ENCODE measurements at regions of chr20 and their contacts with region 1.

Region 1: GRCh38 chr20:8131598-8132483 is at the start of gene PLCB1:
- DNase-seq: peak; percentile 53 to 93 (median 77)
- ATAC-seq: peak; percentile 90
- H3K4me3 ChIP-seq: peak within 1 kb of the TSS; percentile 55 to 61
- H3K4me3 Mint-ChIP-seq: peak within 1 kb of the TSS; percentile 80
- H3K27ac ChIP-seq: no peak within 1 kb of the TSS
- H3K27ac Mint-ChIP-seq: no peak within 1 kb of the TSS
- H3K4me1 ChIP-seq: peaks cover 10% of the 10 kb centered on the region
- H3K4me1 Mint-ChIP-seq: peaks cover 24% of the 10 kb centered on the region
- H3K27me3 ChIP-seq: no peaks in the 10 kb centered on the region
- H3K27me3 Mint-ChIP-seq: peaks cover 3% of the 10 kb centered on the region
- CTCF ChIP-seq: peak; percentile 50
- total RNA-seq, gene PLCB1: 4.6 to 5.0 TPM

Region 2: GRCh38 chr20:8019246-8019997 is 112.4 kb before region 1 on chr20 and contains the start of gene TMX4:
- CTCF ChIA-PET with region 1: no interaction called
- POLR2A ChIA-PET with region 1: no interaction called
- intact Hi-C with region 1: loop called in 1 of 2 experiments (anchors 1 kb)
- DNase-seq: peak; percentile 72 to 94 (median 88)
- ATAC-seq: peak; percentile 78
- H3K4me3 ChIP-seq: peak within 1 kb of the TSS; percentile 49 to 68
- H3K4me3 Mint-ChIP-seq: peak within 1 kb of the TSS; percentile 94
- H3K27ac ChIP-seq: peak within 1 kb of the TSS; percentile 70 to 81
- H3K27ac Mint-ChIP-seq: peak within 1 kb of the TSS; percentile 93
- H3K4me1 ChIP-seq: peaks cover 25% of the 10 kb centered on the region
- H3K4me1 Mint-ChIP-seq: peaks cover 33% of the 10 kb centered on the region
- H3K27me3 ChIP-seq: no peaks in the 10 kb centered on the region
- H3K27me3 Mint-ChIP-seq: no peaks in the 10 kb centered on the region
- CTCF ChIP-seq: no peak
- total RNA-seq, gene TMX4: 45.6 to 47.9 TPM

Region 3: GRCh38 chr20:8156235-8157079 is 24.6 kb after region 1 on chr20:
- CTCF ChIA-PET with region 1: interaction called, 5 read pairs
- POLR2A ChIA-PET with region 1: no interaction called
- intact Hi-C with region 1: loop called in 1 of 2 experiments (anchors 2 kb)
- DNase-seq: peak in 2 of 9 experiments; percentile 63 to 72
- ATAC-seq: peak; percentile 63
- H3K4me3 ChIP-seq: no peak overlapping the region
- H3K4me3 Mint-ChIP-seq: no peak overlapping the region
- H3K27ac ChIP-seq: no peak overlapping the region
- H3K27ac Mint-ChIP-seq: peak overlapping the region; percentile 38
- H3K4me1 ChIP-seq: peaks cover 52% of the 10 kb centered on the region
- H3K4me1 Mint-ChIP-seq: peaks cover 55% of the 10 kb centered on the region
- H3K27me3 ChIP-seq: no peaks in the 10 kb centered on the region
- H3K27me3 Mint-ChIP-seq: no peaks in the 10 kb centered on the region
- CTCF ChIP-seq: no peak

Region 4: GRCh38 chr20:8389381-8390036 is 257.7 kb after region 1 on chr20:
- CTCF ChIA-PET with region 1: interaction called, 32 read pairs
- POLR2A ChIA-PET with region 1: no interaction called
- intact Hi-C with region 1: loop called (anchors 1 kb)
- DNase-seq: peak in 2 of 9 experiments; percentile 52 to 62
- ATAC-seq: peak; percentile 34
- H3K4me3 ChIP-seq: no peak overlapping the region
- H3K4me3 Mint-ChIP-seq: no peak overlapping the region
- H3K27ac ChIP-seq: no peak overlapping the region
- H3K27ac Mint-ChIP-seq: no peak overlapping the region
- H3K4me1 ChIP-seq: no peaks in the 10 kb centered on the region
- H3K4me1 Mint-ChIP-seq: peaks cover 3% of the 10 kb centered on the region
- H3K27me3 ChIP-seq: no peaks in the 10 kb centered on the region
- H3K27me3 Mint-ChIP-seq: no peaks in the 10 kb centered on the region
- CTCF ChIP-seq: peak; percentile 74

Region 5: DNA sequence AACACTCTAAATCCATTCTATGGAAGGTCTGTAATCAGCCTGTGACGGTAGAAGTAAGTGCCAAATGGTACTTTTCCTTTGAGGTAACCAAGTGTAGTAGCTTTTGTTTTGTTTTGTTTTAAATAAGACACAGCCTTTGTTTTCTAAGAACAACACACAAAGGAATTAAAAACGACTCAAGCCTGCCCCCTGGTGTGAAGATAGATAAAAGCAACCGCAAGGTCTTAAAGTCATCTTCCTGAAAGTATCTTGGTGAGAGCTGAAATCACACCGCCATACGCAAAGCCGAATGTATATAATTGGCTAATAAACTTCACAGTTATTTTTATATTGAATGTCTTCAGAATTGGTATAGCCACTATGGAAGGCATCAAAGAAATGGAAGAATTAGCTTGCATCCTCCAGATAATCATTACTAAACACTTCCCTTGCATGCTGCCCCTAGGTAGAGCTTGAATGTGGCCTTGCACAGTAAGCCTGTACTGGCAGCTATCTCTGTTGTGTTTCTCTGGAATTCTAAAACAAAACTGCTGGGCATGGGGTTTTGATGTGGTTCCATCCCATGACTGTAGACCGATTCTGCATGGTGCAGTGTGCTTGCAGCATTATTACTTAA is 1478.2 kb after region 1 on chr20:
- CTCF ChIA-PET with region 1: no interaction called
- POLR2A ChIA-PET with region 1: no interaction called
- intact Hi-C with region 1: loop called in 1 of 2 experiments (anchors 10 kb)
- DNase-seq: peak in 5 of 9 experiments; percentile 5 to 38 (median 20)
- ATAC-seq: no peak
- H3K4me3 ChIP-seq: no peak overlapping the region
- H3K4me3 Mint-ChIP-seq: no peak overlapping the region
- H3K27ac ChIP-seq: no peak overlapping the region
- H3K27ac Mint-ChIP-seq: no peak overlapping the region
- H3K4me1 ChIP-seq: no peaks in the 10 kb centered on the region
- H3K4me1 Mint-ChIP-seq: no peaks in the 10 kb centered on the region
- H3K27me3 ChIP-seq: no peaks in the 10 kb centered on the region
- H3K27me3 Mint-ChIP-seq: peaks cover 2% of the 10 kb centered on the region
- CTCF ChIP-seq: peak; percentile 31